ENCODE measurements at regions of chr1 and their contacts with region 1.

Region 1: DNA sequence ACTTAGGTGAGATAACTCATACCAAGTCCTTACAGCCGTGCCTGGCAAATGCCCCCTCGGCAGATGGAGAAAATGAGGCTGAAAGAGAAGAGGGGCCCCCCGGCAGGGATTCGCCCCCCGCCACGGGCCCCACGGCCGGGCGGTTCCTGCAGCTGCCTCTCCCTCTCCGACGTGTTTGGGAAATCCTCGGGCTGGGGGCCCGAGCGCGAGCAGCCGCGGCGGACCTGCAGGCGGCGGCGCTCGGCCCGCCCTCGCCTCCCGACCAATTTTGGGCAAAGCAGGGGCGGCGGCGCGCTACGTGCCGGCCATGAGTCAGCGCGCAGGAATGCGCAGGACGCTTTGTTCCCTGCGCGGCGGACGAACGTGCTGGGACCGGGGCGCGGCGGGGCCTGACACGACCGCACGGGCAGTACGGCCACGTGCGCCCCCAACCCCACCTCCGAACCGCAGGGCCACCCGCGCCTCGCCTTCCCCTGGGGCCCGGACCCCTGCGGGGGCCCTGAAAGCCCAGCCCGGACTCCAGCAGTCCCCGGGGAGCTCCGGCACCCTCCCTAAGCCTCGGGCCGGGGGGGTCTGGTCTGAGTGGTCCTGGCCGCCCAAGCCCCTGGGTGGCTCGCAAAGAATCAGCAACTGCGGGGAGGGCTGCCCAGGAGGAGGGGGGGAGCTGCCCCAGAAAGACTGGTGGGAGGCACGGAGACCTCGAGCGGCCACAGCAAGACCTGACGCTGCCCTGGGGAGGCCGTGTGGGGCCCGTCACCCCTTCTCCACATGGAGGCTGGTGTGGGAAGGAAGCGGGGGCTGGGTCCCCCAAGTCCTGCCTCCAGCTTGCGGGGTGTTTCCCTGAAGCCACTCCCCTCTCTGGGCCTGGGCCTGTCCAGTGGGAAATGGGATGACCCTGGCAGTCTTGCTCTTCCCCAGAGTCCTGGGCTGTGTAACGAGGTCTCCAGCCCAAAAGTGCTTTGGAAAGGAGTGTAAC is 11.9 kb upstream of the EDN2 start:
- DNase-seq: peak; percentile 61 to 79 (median 71)
- H3K4me3 ChIP-seq: peak overlapping the region; percentile 17 to 67 (median 47)
- H3K27ac ChIP-seq: no peak overlapping the region
- H3K4me1 ChIP-seq: peaks cover 0 to 25% (median 11%) of the 10 kb centered on the region in 4 experiments
- H3K27me3 ChIP-seq: peaks cover 0 to 18% (median 7%) of the 10 kb centered on the region in 5 experiments

Region 2: GRCh38 chr1:41404308-41404761 is 92.0 kb before region 1 on chr1:
- CTCF ChIA-PET with region 1: no interaction called
- POLR2A ChIA-PET with region 1: no interaction called
- DNase-seq: peak; percentile 74 to 93 (median 92)
- H3K4me3 ChIP-seq: no peak overlapping the region
- H3K27ac ChIP-seq: no peak overlapping the region
- H3K4me1 ChIP-seq: peaks cover 0 to 13% (median 10%) of the 10 kb centered on the region in 4 experiments
- H3K27me3 ChIP-seq: peaks cover 0 to 10% (median 7%) of the 10 kb centered on the region in 5 experiments

Region 3: DNA sequence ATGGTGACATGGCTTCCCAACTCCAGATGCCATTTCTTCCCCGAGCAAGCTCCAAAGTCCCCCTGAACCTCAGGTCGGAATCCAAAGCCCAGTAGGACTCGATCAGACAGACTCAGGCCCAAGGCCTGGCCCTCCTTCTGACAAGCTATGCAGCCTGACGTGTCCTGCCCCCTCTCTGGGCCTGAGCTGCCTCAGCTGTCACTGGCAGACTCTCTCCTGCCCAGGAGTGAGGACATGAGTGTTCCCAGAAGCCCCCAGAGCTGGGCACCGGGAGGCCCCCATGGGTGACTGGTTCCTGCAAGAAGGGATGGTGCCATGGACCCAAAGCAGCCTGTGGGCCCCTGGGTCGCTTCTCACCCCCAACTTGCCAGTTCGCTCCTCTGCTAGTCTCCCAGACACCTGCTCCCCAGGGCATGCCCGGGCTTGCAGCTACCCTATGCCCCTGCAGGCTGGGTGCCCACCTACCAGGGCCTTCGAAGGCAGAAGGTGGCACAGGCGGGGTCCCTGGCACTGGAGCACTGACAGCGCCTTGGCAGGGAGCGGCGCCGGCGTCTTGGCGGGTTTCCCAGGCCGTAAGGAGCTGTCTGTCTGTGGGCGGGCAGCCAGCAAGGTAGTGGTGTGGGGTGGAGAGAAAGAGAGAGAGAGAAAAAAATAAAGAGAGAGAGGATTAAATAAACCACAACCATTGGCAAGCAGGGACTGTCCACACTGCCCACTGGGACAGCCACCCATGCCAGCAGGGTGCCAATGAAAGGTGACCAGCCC is 14.2 kb before region 1 on chr1:
- CTCF ChIA-PET with region 1: interaction called, 10 read pairs
- POLR2A ChIA-PET with region 1: no interaction called
- DNase-seq: peak in 1 of 3 donors; percentile 25
- H3K4me3 ChIP-seq: no peak overlapping the region
- H3K27ac ChIP-seq: no peak overlapping the region
- H3K4me1 ChIP-seq: peaks cover 0 to 8% (median 5%) of the 10 kb centered on the region in 4 experiments
- H3K27me3 ChIP-seq: peaks cover 0 to 9% (median 6%) of the 10 kb centered on the region in 5 experiments

Region 4: GRCh38 chr1:41516168-41517061 is 20.0 kb after region 1 on chr1:
- CTCF ChIA-PET with region 1: interaction called, 12 read pairs
- POLR2A ChIA-PET with region 1: no interaction called
- DNase-seq: peak; percentile 76 to 81 (median 80)
- H3K4me3 ChIP-seq: peak overlapping the region in 6 of 7 experiments; percentile 1 to 83 (median 62)
- H3K27ac ChIP-seq: no peak overlapping the region
- H3K4me1 ChIP-seq: peaks cover 0 to 12% (median 10%) of the 10 kb centered on the region in 4 experiments
- H3K27me3 ChIP-seq: no peaks in the 10 kb centered on the region